ENCODE measurements at regions of chr5 and their contacts with region 1.

Region 1: GRCh38 chr5:20248118-20248517 is 260.1 kb upstream of the CDH18 start:
- DNase-seq: no peak
- H3K4me3 ChIP-seq: no peak overlapping the region
- H3K27ac ChIP-seq: no peak overlapping the region
- H3K4me1 ChIP-seq: no peaks in the 10 kb centered on the region
- H3K27me3 ChIP-seq: no peaks in the 10 kb centered on the region
- CTCF ChIP-seq: no peak

Region 2: GRCh38 chr5:20145240-20145639 is 102.9 kb before region 1 on chr5:
- CTCF ChIA-PET with region 1: no interaction called
- POLR2A ChIA-PET with region 1: no interaction called
- intact Hi-C with region 1: no loop called
- DNase-seq: no peak
- H3K4me3 ChIP-seq: no peak overlapping the region
- H3K27ac ChIP-seq: no peak overlapping the region
- H3K4me1 ChIP-seq: no peaks in the 10 kb centered on the region
- H3K27me3 ChIP-seq: no peaks in the 10 kb centered on the region
- CTCF ChIP-seq: no peak

Region 3: DNA sequence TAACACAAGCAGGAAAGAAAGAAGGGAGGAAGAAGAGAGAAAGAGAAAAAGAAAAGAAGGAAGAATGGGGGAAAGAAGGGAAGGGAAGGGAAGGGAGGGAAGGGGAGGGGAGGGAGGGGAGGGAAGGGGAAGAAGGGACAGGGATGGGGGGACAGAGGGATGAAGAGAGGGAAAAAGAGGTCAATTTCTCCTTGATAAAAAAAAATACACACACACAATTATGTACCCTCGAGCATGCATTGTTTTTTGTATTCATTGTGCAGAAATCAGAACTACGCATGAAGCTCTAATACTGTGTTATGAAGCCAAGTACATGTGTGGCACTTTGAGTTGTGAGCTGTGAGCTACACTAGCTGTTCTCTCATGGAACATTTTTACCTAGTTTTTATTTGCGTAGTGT is 14.8 kb after region 1 on chr5:
- CTCF ChIA-PET with region 1: interaction called, 14 read pairs
- POLR2A ChIA-PET with region 1: no interaction called
- intact Hi-C with region 1: no loop called
- DNase-seq: no peak
- H3K4me3 ChIP-seq: no peak overlapping the region
- H3K27ac ChIP-seq: no peak overlapping the region
- H3K4me1 ChIP-seq: no peaks in the 10 kb centered on the region
- H3K27me3 ChIP-seq: no peaks in the 10 kb centered on the region
- CTCF ChIP-seq: no peak